Aorta (tissue), 5 donors: ENCODE measurements at regions of chr20 and their contacts with region 1.

Region 1: GRCh38 chr20:62616728-62617621 is 25.3 kb upstream of the SLCO4A1 start:
- DNase-seq: peak; percentile 81 to 91
- ATAC-seq: peak; percentile 84
- H3K4me3 ChIP-seq: no peak overlapping the region
- H3K27ac ChIP-seq: no peak overlapping the region
- H3K4me1 ChIP-seq: no peaks in the 10 kb centered on the region
- H3K27me3 ChIP-seq: no peaks in the 10 kb centered on the region

Region 2: DNA sequence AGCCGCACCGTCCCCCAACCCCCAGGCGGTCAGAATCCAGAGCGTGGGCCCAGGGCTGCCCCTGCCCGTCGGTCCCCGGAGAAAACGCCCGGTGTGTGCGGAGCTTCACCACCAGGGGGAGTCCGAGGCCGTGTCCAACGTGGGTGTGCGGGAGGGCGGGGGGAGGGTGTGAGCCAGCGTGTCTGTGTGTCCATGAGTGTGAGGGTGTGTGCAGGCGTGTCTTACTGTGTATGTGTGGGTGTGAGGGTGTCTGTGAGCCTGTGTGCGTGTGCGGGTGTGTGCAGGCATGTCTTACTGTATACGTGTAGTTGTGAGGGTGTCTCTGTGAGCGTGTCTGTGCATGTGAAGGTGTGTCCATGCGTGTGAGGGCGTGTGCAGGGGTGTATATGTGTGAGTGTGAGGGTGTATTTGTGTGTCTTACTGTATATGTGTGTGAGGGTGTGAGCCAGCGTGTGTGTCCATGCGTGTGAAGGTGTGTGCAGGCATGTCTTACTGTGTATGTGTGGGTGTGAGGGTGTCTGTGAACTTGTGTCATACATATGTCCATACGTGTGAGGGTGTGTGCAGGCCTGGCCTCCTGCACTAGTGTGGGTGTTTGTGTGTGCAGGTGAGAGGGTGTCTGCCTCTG is 116.6 kb before region 1 on chr20:
- intact Hi-C with region 1: loop called (anchors 2 kb)
- DNase-seq: peak; percentile 80 to 95
- ATAC-seq: peak; percentile 85
- H3K4me3 ChIP-seq: no peak overlapping the region
- H3K27ac ChIP-seq: no peak overlapping the region
- H3K4me1 ChIP-seq: no peaks in the 10 kb centered on the region
- H3K27me3 ChIP-seq: no peaks in the 10 kb centered on the region